SK-N-SH (cell line): ENCODE measurements at regions of chr4 and their contacts with region 1.

Region 1: DNA sequence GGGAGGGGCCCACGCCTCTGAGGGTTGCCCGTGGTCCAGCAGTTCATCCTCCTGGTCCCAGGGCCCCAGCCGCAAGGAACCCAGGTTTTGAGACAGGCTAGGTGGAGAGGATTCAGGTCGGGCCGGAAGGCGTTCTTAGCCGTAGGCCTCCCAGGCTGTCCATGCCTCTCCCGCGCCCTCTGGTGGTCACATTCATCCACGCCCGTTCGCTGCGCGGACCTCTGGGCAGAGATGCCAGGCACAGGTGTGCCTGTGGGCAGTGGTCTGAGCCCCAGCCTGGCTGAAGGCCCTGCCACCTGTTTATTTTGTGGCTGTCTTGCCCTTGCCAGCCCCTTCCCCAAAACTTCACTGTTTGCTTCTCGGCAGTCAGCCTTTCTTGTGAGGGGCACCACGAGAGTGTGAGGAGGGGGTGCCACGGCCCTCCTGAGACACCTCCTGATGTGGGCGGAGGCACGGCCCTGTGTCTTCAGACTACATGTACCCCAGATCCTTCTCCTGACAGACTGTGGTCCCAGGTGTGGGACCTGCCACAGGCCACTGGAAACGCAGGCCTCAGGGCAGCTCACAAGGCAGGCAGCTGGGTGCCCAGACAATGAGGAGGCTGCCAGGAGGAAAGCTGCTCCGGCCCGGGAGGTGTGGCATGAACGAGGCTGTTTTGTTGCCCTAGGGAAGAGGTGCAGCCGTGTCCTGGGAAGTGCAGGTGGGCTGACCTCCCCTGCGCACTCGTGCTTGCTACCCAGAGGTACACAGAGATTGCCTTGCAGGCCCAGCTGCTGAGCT is 5.0 kb downstream of the UVSSA start:
- DNase-seq: peak; percentile 91
- H3K4me3 ChIP-seq: peak overlapping the region in 1 of 2 experiments; percentile 17; a peak in 1 of 4 replicates
- H3K27ac ChIP-seq: no peak overlapping the region
- H3K4me1 ChIP-seq: peaks cover 0 to 14% of the 10 kb centered on the region in 2 experiments; a peak in 1 of 4 replicates
- H3K27me3 ChIP-seq: no peaks in the 10 kb centered on the region
- CTCF ChIP-seq: peak; percentile 91
- EP300 ChIP-seq: no peak
- RAD21 ChIP-seq: peak; percentile 70

Region 2: GRCh38 chr4:997375-998071 is 354.5 kb before region 1 on chr4:
- CTCF ChIA-PET with region 1: no interaction called
- POLR2A ChIA-PET with region 1: no interaction called
- DNase-seq: peak; percentile 85
- H3K4me3 ChIP-seq: peak overlapping the region; percentile 29 to 33; a peak in 3 of 4 replicates
- H3K27ac ChIP-seq: no peak overlapping the region
- H3K4me1 ChIP-seq: no peaks in the 10 kb centered on the region; a peak in 1 of 4 replicates
- H3K27me3 ChIP-seq: peaks cover 15% of the 10 kb centered on the region
- CTCF ChIP-seq: no peak
- EP300 ChIP-seq: no peak
- RAD21 ChIP-seq: no peak

Region 3: GRCh38 chr4:1365271-1366178 is 13.5 kb after region 1 on chr4:
- CTCF ChIA-PET with region 1: interaction called, 18 read pairs
- POLR2A ChIA-PET with region 1: no interaction called
- DNase-seq: no peak
- H3K4me3 ChIP-seq: no peak overlapping the region
- H3K27ac ChIP-seq: no peak overlapping the region
- H3K4me1 ChIP-seq: peaks cover 0 to 9% of the 10 kb centered on the region in 2 experiments; a peak in 1 of 4 replicates
- H3K27me3 ChIP-seq: no peaks in the 10 kb centered on the region
- CTCF ChIP-seq: no peak
- EP300 ChIP-seq: no peak
- RAD21 ChIP-seq: no peak

Region 4: DNA sequence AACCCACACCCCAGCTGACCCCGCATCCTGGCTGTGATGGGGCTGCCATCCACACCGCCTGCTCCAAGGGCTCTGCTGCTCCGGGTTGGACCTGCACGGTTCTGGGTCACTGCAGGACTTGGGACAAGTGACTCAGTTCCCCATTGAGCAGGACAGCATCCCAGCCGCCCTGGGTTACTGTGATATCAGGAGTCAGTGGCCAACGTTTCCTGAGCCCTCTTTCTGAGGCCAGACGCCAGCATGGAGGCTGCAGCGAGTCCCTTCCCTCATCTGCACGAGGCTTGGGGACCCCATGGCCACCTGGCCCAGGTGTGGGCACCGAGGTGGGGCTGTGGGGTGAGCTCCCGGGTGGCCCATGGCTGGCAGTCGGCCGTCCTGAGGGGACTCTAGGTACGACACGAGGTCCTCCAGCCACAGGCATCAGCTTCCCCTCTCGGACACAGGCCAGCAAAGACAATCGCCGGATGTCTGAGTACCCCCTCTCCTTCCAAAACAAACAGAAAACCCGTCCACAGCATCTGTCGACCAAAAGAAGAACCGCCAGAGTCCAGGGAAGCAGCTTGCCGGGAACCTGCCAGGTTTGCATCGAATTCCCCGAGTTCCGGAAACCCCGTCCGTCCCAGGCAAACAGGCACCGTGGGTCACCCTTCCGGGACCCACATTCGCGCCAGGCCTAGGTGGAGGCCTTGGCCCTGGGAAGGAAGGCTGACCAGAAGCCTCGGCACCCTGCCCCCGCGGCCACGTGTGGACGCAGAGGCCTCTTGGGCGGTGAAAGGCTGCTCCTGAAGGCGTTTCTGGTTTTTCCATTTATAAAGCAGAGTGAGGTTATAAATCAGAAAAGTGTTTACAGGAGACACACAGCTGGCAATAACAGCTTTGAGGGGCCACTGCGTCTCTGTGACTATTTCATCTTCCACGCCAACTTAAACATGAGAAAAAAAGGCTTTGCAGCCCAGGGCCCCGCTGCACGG is 196.1 kb after region 1 on chr4:
- CTCF ChIA-PET with region 1: interaction called, 13 read pairs
- POLR2A ChIA-PET with region 1: no interaction called
- DNase-seq: no peak
- H3K4me3 ChIP-seq: no peak overlapping the region
- H3K27ac ChIP-seq: no peak overlapping the region
- H3K4me1 ChIP-seq: no peaks in the 10 kb centered on the region
- H3K27me3 ChIP-seq: peaks cover 24% of the 10 kb centered on the region
- CTCF ChIP-seq: no peak
- EP300 ChIP-seq: no peak
- RAD21 ChIP-seq: no peak

Region 5: GRCh38 chr4:1592709-1593417 is 240.8 kb after region 1 on chr4:
- CTCF ChIA-PET with region 1: interaction called, 10 read pairs
- POLR2A ChIA-PET with region 1: no interaction called
- DNase-seq: no peak
- H3K4me3 ChIP-seq: no peak overlapping the region
- H3K27ac ChIP-seq: no peak overlapping the region
- H3K4me1 ChIP-seq: peaks cover 0 to 7% of the 10 kb centered on the region in 2 experiments; a peak in 1 of 4 replicates
- H3K27me3 ChIP-seq: peaks cover 38% of the 10 kb centered on the region
- CTCF ChIP-seq: no peak
- EP300 ChIP-seq: no peak
- RAD21 ChIP-seq: no peak